ENCODE measurements at regions of chr2 and their contacts with region 1.

Region 1: DNA sequence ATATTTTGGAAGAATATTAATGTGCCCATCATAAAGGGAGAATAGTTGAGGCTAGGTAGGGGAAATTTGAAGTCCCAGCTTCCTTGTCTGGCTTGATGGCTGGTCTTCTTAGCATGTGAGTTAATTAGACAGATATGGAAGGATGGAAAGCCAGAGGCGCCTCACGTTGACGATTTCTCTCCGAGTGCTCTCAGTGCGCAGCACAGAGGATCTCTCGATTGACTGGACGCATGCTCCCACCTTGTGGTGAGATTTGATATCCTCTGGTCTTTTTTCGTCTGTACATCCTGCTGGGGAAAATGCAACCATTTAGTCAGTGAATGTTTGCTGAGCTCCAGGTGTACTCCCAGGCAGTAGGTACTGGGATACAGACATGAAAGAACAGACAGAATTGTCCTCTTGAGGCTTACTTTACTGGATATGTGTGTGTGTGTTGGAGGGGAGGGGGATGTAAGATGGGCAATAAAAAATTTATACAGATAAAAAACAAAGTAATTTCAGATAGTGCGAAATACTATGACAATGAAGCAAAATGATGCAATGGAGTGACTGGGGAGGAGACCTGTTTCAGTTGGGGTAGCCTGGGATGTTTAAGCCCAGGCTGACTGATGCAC is 66.9 kb upstream of the ZNG1B start:
- DNase-seq: no peak

Region 2: GRCh38 chr2:113248997-113249770 is 121.4 kb before region 1 on chr2:
- intact Hi-C with region 1: loop called (anchors 2 kb)
- DNase-seq: peak; percentile 91